ENCODE measurements at regions of chr4 and their contacts with region 1.

Region 1: DNA sequence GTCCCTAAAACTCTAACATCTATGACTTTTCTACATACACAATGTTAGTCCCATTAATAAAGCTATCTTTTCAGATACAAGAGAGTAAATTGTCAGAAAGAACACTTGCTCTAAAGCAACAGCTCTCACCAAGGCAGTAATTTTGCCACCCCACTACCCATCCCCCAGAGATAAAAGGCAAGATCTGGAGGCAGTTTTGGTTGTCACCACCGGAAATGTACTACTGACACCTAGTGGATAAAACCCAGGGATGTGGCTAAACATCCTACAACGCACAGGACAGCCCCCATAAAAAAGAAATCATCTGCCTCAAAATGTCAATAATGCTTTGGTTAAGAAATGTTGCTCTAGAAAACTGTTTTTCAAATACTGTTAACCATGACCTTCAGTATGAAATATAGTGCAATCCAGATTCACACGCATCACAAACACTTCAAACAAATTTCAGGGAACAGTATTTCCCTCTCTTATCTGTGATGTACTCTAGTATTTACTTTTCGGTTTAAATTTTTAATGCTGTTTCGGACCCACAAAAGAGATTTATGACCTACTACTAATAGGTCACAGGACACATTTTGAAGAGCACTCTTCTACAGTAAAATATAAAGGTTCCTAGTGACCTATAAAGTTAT is 5.1 kb downstream of the FBXL5 start:
- DNase-seq: no peak
- H3K4me3 ChIP-seq: no peak overlapping the region
- H3K27ac ChIP-seq: peak overlapping the region; percentile 99
- H3K4me1 ChIP-seq: peaks cover 98% of the 10 kb centered on the region
- H3K27me3 ChIP-seq: no peaks in the 10 kb centered on the region
- CTCF ChIP-seq: peak; percentile 73

Region 2: DNA sequence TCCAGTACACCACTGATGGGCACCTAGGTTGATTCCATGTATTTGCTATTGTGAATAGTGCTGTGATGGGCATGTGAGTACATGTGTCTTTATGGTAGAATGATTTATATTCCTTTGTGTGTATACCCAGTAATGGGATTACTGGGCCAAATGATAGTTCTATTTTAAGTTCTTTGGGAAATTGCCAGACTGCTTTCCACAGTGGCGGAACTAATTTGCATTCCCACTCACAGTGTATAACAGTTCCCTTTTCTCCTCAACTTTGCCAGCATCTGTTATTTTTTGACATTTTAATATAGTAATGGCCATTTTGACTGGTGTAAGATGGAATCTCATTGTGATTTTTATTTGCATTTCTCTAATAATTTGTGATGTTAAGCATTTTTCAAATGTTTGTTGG is 154.4 kb before region 1 on chr4:
- intact Hi-C with region 1: loop called (anchors 10 kb)
- DNase-seq: no peak
- H3K4me3 ChIP-seq: no peak overlapping the region
- H3K27ac ChIP-seq: no peak overlapping the region
- H3K4me1 ChIP-seq: peaks cover 24% of the 10 kb centered on the region
- H3K27me3 ChIP-seq: no peaks in the 10 kb centered on the region
- CTCF ChIP-seq: no peak